Common myeloid progenitor, CD34-positive (primary cell): ENCODE measurements at regions of chr1 and their contacts with region 1.

Region 1: DNA sequence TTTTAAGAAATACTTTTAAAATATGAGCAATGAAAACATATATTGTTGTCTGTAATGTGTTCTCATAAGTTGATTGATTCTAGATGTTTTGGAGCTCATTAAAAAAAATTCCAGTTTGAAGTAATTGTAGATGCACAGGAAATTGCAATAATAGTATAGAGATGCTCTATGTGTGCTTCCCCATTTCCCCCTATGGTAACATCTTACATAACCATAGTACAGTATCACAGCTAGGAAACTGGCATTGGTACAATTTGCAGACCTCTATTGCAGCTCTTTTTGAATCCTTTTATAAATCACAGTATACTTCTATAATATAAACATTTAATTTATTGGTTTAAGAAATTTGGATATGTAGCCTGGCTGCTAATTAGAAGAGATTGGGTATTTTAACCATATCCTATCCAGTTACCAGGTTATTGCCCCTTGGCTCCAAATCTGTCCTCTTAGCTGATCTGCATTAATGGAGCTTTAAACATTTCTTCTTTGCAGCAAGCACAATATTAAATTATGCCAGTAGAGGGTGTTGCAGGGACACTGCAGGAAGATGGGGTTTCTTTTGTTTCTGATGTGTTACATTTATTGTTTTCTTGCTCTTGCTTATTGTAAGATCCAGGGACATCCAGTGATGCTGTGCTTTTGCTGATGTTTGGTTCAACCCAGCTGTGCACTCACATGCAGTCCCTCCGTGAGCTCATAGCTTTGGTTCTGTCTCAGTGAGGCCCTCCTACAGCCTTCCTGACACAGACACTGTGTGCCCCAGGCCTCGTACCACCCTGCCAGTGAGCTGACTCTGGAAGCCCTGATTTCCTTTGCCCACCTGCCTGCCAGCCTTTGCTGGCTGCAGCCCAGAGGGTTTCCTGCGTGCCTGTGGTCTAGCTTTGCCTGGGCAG is 103.3 kb downstream of the RABGAP1L start:
- DNase-seq: peak; percentile 46 to 71 (median 68)
- H3K4me3 ChIP-seq: no peak overlapping the region
- H3K27ac ChIP-seq: no peak overlapping the region
- H3K4me1 ChIP-seq: no peaks in the 10 kb centered on the region
- H3K27me3 ChIP-seq: no peaks in the 10 kb centered on the region

Region 2: GRCh38 chr1:174276087-174276486 is 13.5 kb after region 1 on chr1:
- CTCF ChIA-PET with region 1: interaction called, 34 read pairs
- POLR2A ChIA-PET with region 1: no interaction called
- DNase-seq: no peak
- H3K4me3 ChIP-seq: no peak overlapping the region
- H3K27ac ChIP-seq: no peak overlapping the region
- H3K4me1 ChIP-seq: no peaks in the 10 kb centered on the region
- H3K27me3 ChIP-seq: no peaks in the 10 kb centered on the region

Region 3: GRCh38 chr1:174726167-174726879 is 463.7 kb after region 1 on chr1:
- CTCF ChIA-PET with region 1: interaction called, 19 read pairs
- POLR2A ChIA-PET with region 1: no interaction called
- DNase-seq: peak; percentile 25 to 59 (median 58)
- H3K4me3 ChIP-seq: no peak overlapping the region
- H3K27ac ChIP-seq: no peak overlapping the region
- H3K4me1 ChIP-seq: no peaks in the 10 kb centered on the region
- H3K27me3 ChIP-seq: no peaks in the 10 kb centered on the region

Region 4: GRCh38 chr1:174743654-174744561 is 481.3 kb after region 1 on chr1:
- CTCF ChIA-PET with region 1: interaction called, 64 read pairs
- POLR2A ChIA-PET with region 1: no interaction called
- DNase-seq: peak; percentile 50 to 80 (median 75)
- H3K4me3 ChIP-seq: no peak overlapping the region
- H3K27ac ChIP-seq: no peak overlapping the region
- H3K4me1 ChIP-seq: peaks cover 0 to 8% (median 4%) of the 10 kb centered on the region in 4 experiments
- H3K27me3 ChIP-seq: no peaks in the 10 kb centered on the region